Left ventricle myocardium superior (tissue), 1 donor: ENCODE measurements at regions of chr20 and their contacts with region 1.

Region 1: GRCh38 chr20:32521780-32522525 is 63.2 kb downstream of the NOL4L start:
- DNase-seq: peak; percentile 74
- ATAC-seq: peak; percentile 70

Region 2: GRCh38 chr20:32652739-32653526 is 131.0 kb after region 1 on chr20:
- intact Hi-C with region 1: loop called (anchors 2 kb)
- DNase-seq: peak; percentile 90
- ATAC-seq: peak; percentile 98